Activated CD4-positive, alpha-beta T cell treated with anti-CD3 and anti-CD28 coated beads for 36 hours (primary cell): ENCODE measurements at regions of chr7 and their contacts with region 1.

Region 1: GRCh38 chr7:130733931-130734814 is at the start of gene KLF14:
- DNase-seq: peak; percentile 59
- ATAC-seq: peak; percentile 61
- H3K4me3 Mint-ChIP-seq: peak within 1 kb of the TSS; percentile 72
- H3K27ac Mint-ChIP-seq: no peak within 1 kb of the TSS
- H3K4me1 Mint-ChIP-seq: peaks cover 8% of the 10 kb centered on the region
- H3K27me3 Mint-ChIP-seq: peaks cover 62% of the 10 kb centered on the region
- total RNA-seq, gene KLF14: not detected

Region 2: DNA sequence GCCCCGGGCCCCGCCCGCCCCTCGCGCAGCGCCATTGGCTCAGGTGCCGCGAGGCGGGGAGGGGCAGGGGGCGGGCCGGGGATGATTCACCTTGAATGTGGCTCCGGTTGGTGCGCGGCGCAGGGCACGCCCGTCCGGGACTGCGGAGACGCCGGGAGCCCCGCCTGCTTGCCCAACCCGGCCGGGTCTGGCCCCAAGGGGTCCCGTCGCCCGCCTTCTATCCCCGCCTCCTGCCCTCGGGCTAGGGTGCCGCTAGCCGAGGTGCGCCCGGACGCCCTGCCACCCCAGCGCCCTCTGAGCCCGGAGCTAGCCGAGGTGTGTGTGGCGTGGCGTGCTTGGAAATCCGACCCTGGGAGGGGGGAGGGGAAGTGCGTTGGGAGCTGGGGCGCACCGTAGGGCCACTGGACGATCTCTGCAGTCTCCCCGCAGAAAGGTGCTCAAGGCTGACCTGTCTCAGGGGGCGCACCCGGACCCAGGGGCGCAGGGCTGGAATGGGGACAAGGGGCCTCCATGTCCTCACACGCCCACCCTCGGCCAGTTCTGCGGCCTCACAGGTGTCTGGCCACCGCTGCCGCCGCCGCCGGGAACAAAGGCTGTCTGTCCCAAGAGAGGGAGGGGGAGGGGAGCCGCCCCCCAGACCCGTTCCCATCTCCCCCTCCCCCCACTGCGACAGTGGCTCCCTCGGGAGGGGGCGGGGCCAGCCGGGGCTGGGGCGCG is 953.8 kb before region 1 on chr7:
- CTCF ChIA-PET with region 1: no interaction called
- POLR2A ChIA-PET with region 1: no interaction called
- intact Hi-C with region 1: loop called in 1 of 2 experiments (anchors 10 kb)
- DNase-seq: peak; percentile 92
- ATAC-seq: peak; percentile 82
- H3K4me3 Mint-ChIP-seq: peak overlapping the region; percentile 66
- H3K27ac Mint-ChIP-seq: no peak overlapping the region
- H3K4me1 Mint-ChIP-seq: peaks cover 33% of the 10 kb centered on the region
- H3K27me3 Mint-ChIP-seq: peaks cover 58% of the 10 kb centered on the region

Region 3: GRCh38 chr7:130409067-130409713 is 325.0 kb before region 1 on chr7:
- CTCF ChIA-PET with region 1: no interaction called
- POLR2A ChIA-PET with region 1: no interaction called
- intact Hi-C with region 1: no loop called
- DNase-seq: no peak
- ATAC-seq: no peak
- H3K4me3 Mint-ChIP-seq: no peak overlapping the region
- H3K27ac Mint-ChIP-seq: no peak overlapping the region
- H3K4me1 Mint-ChIP-seq: peaks cover 20% of the 10 kb centered on the region
- H3K27me3 Mint-ChIP-seq: no peaks in the 10 kb centered on the region

Region 4: GRCh38 chr7:130491841-130492522 is 242.2 kb before region 1 on chr7 and contains the start of gene MEST:
- CTCF ChIA-PET with region 1: no interaction called
- POLR2A ChIA-PET with region 1: no interaction called
- intact Hi-C with region 1: loop called in 1 of 2 experiments (anchors 2 kb)
- DNase-seq: peak; percentile 21
- ATAC-seq: peak; percentile 55
- H3K4me3 Mint-ChIP-seq: peak within 1 kb of the TSS; percentile 40
- H3K27ac Mint-ChIP-seq: no peak within 1 kb of the TSS
- H3K4me1 Mint-ChIP-seq: peaks cover 17% of the 10 kb centered on the region
- H3K27me3 Mint-ChIP-seq: peaks cover 39% of the 10 kb centered on the region
- total RNA-seq, gene MEST: 1.7 to 1.9 TPM

Region 5: DNA sequence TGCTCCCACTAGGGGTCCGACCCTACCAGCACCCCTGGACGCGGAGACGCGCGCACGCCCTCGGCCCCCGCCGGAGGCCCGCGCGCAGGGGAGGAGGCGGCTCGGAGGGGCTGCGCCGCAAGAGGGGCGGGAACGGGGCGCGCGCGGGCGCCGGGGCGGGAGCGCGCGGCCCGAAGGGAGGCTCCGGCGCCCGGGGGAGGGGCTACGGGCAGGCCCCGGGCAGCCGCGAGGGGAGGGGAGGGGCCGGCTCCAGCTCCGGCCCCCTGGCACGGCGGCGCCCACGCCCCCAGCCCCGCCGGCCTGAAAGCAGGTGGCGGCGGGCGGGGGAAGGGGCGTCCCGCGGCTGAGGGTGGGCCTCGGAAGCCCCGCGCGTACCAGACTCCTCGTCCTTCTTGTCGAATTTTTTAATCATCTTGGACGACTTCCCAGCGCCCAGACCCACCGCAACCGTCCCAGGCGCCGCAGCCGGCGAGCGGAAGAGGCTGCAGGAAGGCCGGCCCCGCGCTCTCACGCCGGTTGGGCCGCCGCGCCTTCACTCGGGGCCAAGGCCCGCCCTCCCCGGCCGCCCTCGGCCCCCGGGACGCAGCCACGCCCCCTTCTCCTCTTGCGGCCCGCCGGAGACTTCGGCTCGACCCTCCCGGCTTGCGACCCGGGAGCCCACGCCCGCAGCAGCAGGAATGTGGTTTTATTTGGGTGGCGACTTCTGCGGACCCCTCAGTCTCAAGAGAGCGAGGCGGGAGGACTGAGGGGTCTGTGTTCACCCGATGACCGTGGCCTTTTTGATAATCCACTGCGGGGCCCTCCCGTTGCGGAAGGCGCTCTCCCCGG is 65.7 kb before region 1 on chr7 and contains the start of gene COPG2:
- CTCF ChIA-PET with region 1: no interaction called
- POLR2A ChIA-PET with region 1: no interaction called
- intact Hi-C with region 1: loop called in 1 of 2 experiments (anchors 1 kb)
- DNase-seq: peak; percentile 86
- ATAC-seq: peak; percentile 97
- H3K4me3 Mint-ChIP-seq: peak within 1 kb of the TSS; percentile 81
- H3K27ac Mint-ChIP-seq: peak within 1 kb of the TSS; percentile 70
- H3K4me1 Mint-ChIP-seq: peaks cover 16% of the 10 kb centered on the region
- H3K27me3 Mint-ChIP-seq: peaks cover 5% of the 10 kb centered on the region
- total RNA-seq, gene COPG2: 23.5 to 25.9 TPM

Region 6: GRCh38 chr7:130683026-130683425 is 51.1 kb before region 1 on chr7:
- CTCF ChIA-PET with region 1: no interaction called
- POLR2A ChIA-PET with region 1: no interaction called
- intact Hi-C with region 1: no loop called
- DNase-seq: no peak
- ATAC-seq: no peak
- H3K4me3 Mint-ChIP-seq: no peak overlapping the region
- H3K27ac Mint-ChIP-seq: no peak overlapping the region
- H3K4me1 Mint-ChIP-seq: no peaks in the 10 kb centered on the region
- H3K27me3 Mint-ChIP-seq: peaks cover 3% of the 10 kb centered on the region